ENCODE measurements at regions of chr1 and their contacts with region 1.

Region 1: GRCh38 chr1:204565617-204566582 is 49.7 kb downstream of the MDM4 start:
- DNase-seq: peak; percentile 84 to 92 (median 90)
- ATAC-seq: peak; percentile 92
- H3K4me3 ChIP-seq: no peak overlapping the region
- H3K27ac ChIP-seq: peak overlapping the region; percentile 4; the same call in 1 of the 3 replicates
- H3K4me1 ChIP-seq: peaks cover 12 to 16% of the 10 kb centered on the region in 2 experiments; a peak in 4 of 5 replicates
- H3K27me3 ChIP-seq: no peaks in the 10 kb centered on the region
- CTCF ChIP-seq: peak; percentile 81 to 91 (median 90)
- EP300 ChIP-seq: peak; percentile 95
- POLR2A ChIP-seq: no peak
- RAD21 ChIP-seq: peak; percentile 94 to 98

Region 2: DNA sequence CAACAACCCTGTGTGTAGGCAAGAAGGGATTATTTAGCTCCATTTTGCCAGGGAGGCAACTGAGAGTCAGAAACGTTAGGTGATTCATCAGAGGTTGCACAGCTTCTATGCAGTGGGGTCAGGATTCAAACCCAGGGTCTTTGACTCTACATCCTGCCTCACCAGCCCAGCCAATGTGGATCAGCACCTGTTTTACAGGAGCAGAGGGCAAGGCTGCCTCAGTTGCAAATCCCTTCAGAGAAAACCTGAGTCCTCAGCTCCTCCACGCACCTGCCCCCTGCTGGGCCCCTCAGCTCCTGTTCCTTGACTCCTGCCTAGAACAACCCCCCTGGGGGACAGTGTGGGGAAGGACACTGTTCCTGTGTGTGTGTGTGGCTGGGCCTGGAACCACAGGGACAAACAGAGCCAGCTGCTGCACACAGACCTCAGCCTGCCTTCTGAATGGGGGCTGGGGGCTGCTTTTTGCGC is 58.0 kb after region 1 on chr1:
- CTCF ChIA-PET with region 1: no interaction called
- POLR2A ChIA-PET with region 1: interaction called, 4 read pairs
- in situ Hi-C with region 1: no loop called
- intact Hi-C with region 1: loop called (anchors 5 kb)
- DNase-seq: peak; percentile 71 to 88 (median 76)
- ATAC-seq: peak; percentile 89
- H3K4me3 ChIP-seq: no peak overlapping the region
- H3K27ac ChIP-seq: no peak overlapping the region
- H3K4me1 ChIP-seq: peaks cover 37 to 40% of the 10 kb centered on the region in 2 experiments
- H3K27me3 ChIP-seq: peaks cover 10 to 25% of the 10 kb centered on the region in 2 experiments
- CTCF ChIP-seq: peak; percentile 85 to 99 (median 87)
- EP300 ChIP-seq: no peak
- POLR2A ChIP-seq: no peak
- RAD21 ChIP-seq: peak in 1 of 2 experiments; percentile 45; a peak in 2 of 4 replicates

Region 3: DNA sequence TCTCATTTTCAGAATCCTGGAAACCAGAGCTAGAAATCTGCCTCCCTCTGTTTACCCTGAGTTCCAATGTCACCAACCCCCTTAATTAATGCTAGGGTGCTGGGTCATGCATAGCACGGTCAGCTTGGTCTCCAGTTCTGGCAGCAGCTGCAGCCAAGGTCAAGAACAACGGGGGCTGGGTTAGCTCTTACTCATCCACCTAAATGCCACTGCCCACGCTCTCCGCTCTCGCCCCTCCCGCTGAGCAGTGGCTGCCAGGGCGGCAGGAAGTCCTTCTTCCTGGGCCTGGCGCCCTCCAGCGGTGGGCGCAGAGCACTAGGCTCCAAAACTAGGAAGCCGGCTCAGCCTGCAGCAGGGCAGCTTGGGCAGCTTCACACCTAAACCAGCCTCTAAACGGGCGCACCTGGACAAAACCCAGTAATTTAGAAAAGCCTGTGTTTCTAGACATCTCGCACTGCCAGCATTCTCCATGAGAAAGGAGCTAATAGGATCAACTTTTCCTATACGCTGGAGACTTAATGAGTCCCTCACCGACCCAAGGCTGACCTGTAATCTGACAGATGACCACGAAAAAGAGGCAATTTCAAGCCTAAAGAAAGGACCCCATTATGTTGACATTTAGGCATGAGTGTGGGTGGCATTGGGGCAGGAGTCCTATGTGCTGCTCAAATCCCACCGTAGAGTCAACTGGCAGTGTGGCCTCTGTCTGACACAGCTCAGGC is 198.0 kb after region 1 on chr1:
- CTCF ChIA-PET with region 1: interaction called, 23 read pairs
- POLR2A ChIA-PET with region 1: no interaction called
- in situ Hi-C with region 1: no loop called
- intact Hi-C with region 1: loop called (anchors 1 kb)
- DNase-seq: peak; percentile 79 to 89 (median 87)
- ATAC-seq: peak; percentile 99
- H3K4me3 ChIP-seq: no peak overlapping the region
- H3K27ac ChIP-seq: no peak overlapping the region
- H3K4me1 ChIP-seq: peaks cover 5 to 6% of the 10 kb centered on the region in 2 experiments; a peak in 4 of 5 replicates
- H3K27me3 ChIP-seq: peaks cover 8 to 14% of the 10 kb centered on the region in 2 experiments; a peak in 4 of 5 replicates
- CTCF ChIP-seq: peak; percentile 93 to 97 (median 95)
- EP300 ChIP-seq: peak; percentile 45; the same call in 1 of the 2 replicates
- POLR2A ChIP-seq: no peak
- RAD21 ChIP-seq: peak; percentile 91

Region 4: GRCh38 chr1:204791453-204792353 is 225.8 kb after region 1 on chr1:
- CTCF ChIA-PET with region 1: interaction called, 3 read pairs
- POLR2A ChIA-PET with region 1: interaction called, 4 read pairs
- in situ Hi-C with region 1: no loop called
- intact Hi-C with region 1: loop called (anchors 5 kb)
- DNase-seq: peak; percentile 85 to 90 (median 89)
- ATAC-seq: peak; percentile 99
- H3K4me3 ChIP-seq: no peak overlapping the region
- H3K27ac ChIP-seq: no peak overlapping the region
- H3K4me1 ChIP-seq: no peaks in the 10 kb centered on the region
- H3K27me3 ChIP-seq: peaks cover 0 to 9% of the 10 kb centered on the region in 2 experiments; a peak in 1 of 5 replicates
- CTCF ChIP-seq: peak; percentile 86 to 98 (median 90)
- EP300 ChIP-seq: no peak
- POLR2A ChIP-seq: no peak
- RAD21 ChIP-seq: peak; percentile 22 to 55; a peak in 3 of 4 replicates

Region 5: DNA sequence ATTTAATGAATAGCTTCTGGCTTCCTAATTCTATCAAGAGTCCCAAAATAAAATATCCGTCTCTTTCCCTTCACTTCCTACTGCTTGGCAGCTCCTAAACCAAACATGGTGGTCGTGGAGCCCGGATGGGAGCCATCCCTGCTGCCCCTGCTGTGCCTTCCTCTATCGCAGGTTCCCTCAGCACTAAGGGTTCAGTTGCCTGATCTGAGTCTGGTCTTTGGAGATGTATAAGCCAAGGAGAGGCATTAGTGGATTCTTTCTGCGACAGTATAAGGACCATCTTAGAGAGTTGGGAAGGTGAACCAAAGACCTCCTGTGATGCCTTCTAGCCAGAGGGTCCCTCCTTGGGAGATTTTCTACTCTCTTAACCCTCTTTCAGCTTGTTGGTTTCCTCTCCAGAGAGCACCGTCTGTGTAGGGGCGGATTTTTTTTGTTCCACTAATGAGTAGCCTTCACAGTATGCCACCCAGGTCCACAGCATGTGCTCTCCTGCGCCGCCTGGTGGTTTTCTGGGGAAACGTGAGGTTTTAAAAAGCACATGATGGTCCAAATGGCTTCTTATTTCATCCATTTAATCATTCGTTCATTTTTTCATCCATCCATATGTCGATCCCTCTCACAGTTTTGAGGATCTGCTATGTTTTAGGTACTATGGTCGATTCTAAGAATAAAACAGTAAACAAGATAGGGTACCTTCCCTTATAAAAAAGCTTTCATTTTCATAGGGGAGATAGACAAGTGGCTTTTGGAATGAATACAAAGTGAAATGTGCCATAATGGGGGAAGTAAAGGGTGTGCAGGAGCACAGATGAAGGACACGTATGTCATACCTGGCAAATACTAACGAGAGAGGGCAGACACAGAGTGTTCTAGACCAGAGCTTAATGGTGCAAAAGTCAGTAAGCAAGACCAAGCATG is 375.8 kb after region 1 on chr1:
- CTCF ChIA-PET with region 1: no interaction called
- POLR2A ChIA-PET with region 1: no interaction called
- in situ Hi-C with region 1: no loop called
- intact Hi-C with region 1: loop called (anchors 10 kb)
- DNase-seq: peak; percentile 73 to 77 (median 75)
- ATAC-seq: peak; percentile 93
- H3K4me3 ChIP-seq: no peak overlapping the region
- H3K27ac ChIP-seq: no peak overlapping the region
- H3K4me1 ChIP-seq: no peaks in the 10 kb centered on the region
- H3K27me3 ChIP-seq: peaks cover 10 to 45% of the 10 kb centered on the region in 2 experiments; a peak in 3 of 5 replicates
- CTCF ChIP-seq: peak; percentile 90 to 97 (median 96)
- EP300 ChIP-seq: no peak
- POLR2A ChIP-seq: no peak
- RAD21 ChIP-seq: peak; percentile 79 to 87